Lower leg skin (tissue), 4 donors: ENCODE measurements at regions of chr11 and their contacts with region 1.

Region 1: DNA sequence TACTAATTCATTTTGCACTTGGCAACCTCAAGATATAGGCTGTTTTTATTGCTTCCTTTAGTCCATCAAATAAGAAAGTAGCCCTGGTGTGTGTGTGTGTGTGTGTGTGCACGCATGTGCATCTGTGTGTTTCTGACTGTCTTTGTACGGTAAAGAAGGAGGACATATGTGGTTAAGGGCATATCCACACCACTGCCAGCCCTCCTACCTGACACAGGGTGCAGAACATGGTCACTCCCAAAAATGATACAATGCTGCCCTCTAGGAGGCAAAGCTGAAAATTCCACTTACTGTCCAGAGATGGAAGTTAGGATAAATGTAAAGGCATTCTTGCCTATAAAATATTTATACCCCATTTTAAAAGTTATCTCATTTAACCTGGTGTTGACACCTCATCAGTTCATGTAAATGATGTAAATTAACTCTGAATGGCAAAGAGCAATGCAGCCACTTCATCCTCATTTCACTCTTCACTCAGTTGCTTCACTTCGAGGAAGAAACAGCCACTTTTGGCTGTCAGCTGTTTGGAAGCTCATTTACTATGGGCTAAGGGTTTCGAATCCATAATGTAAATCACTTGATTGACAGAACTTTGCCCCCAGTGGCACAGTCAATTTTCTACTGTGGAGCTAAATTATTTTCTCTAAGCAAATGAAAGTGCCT is 83.1 kb upstream of the MTNR1B start:
- DNase-seq: no peak
- H3K4me3 ChIP-seq: no peak overlapping the region
- CTCF ChIP-seq: no peak
- POLR2A ChIP-seq: no peak

Region 2: DNA sequence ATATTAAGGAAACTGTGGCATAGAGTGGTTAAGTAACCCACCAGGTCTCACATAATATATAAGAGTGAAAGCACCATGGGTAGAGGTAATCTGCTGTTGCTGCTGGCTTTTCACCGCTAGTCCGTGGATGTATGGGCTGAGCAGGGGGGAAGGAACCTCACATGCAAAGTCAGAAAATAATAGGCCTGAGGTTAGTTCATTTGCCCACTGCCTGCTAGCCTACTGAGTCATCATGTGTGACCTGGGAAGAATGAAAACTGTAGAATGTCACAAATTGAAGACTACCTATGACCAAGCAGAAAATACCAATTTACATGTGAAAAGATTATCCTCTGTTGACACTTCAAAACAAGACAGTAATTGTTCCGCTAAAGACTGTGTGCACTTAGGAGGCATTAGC is 1221.9 kb before region 1 on chr11:
- intact Hi-C with region 1: loop called (anchors 5 kb)
- DNase-seq: no peak
- H3K4me3 ChIP-seq: no peak overlapping the region
- CTCF ChIP-seq: no peak
- POLR2A ChIP-seq: no peak

Region 3: DNA sequence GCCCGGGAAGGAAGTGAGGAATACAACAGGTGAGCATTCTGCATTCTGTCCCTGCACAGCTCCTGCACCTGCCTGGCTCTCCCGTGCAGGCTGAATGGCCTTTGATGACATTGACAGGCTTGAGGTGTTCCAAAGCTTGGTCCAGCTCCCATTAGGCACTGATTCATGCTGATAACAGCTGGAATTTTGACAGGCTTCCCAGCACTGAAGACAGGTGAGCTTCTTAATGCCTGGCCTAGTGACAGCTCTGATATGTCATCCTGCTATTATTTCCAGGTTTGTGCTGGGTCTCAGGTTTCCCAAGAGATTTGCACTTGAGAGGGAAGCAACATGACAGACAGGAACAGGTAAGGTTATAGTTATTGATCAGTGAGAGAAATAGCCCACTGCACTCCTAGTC is 25.1 kb after region 1 on chr11:
- intact Hi-C with region 1: no loop called
- DNase-seq: no peak
- H3K4me3 ChIP-seq: no peak overlapping the region
- CTCF ChIP-seq: no peak
- POLR2A ChIP-seq: no peak

Region 4: GRCh38 chr11:93073026-93073425 is 186.7 kb after region 1 on chr11:
- intact Hi-C with region 1: no loop called
- DNase-seq: no peak
- H3K4me3 ChIP-seq: no peak overlapping the region
- CTCF ChIP-seq: no peak
- POLR2A ChIP-seq: no peak